Activated CD8-positive, alpha-beta T cell treated with anti-CD3 and anti-CD28 coated beads, Interleukin-2, amount 10 ng/mL, durations not matched to agents 7 days and 5 days (primary cell): ENCODE measurements at regions of chr17 and their contacts with region 1.

Region 1: DNA sequence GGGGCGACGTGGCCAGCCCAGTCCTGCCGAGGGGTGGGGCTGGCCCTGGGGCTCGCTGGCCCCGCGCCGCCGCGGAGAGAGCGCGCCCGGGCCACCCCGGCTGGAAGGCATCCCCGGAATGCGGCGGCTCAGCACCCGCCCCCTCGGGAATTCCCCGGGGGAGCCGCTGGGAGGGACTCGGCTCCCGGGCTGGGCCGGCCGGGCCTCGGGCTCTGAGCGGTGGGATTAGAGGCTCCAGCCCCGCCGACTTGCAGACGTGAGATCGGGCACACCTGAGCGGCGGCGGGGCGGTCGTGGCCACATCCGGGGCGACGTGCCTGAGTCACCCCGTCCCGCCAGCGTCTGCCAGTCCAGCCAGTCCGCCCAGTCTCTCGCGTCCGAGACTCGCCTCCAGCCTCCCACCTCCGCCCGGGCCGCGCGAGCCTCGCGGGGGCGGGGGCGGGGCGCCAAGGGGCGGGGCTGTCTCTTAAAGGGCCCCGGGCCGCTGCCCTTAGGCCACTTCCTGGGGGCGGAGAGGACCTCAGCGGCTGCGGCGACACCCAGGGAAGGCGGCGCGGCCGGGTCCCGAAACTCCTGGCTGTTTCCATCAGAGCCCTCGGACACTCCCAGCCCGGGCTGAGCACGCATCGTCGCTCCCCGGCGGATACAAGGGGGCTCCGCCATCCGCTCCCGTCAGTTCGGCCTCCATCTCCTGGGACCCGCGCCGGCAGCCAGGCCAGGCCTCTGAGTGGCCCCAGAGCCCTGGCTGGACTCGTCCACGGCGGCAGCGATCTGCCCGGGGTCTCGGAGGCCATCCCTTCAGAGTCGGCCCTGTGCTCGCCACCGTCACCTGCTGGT is at the start of gene KCTD11:
- DNase-seq: peak; percentile 87
- ATAC-seq: peak; percentile 63
- H3K4me3 Mint-ChIP-seq: peak within 1 kb of the TSS; percentile 76
- H3K27ac Mint-ChIP-seq: peak within 1 kb of the TSS; percentile 81
- H3K4me1 Mint-ChIP-seq: peaks cover 80% of the 10 kb centered on the region
- H3K27me3 Mint-ChIP-seq: no peaks in the 10 kb centered on the region
- total RNA-seq, gene KCTD11: 11.4 to 11.8 TPM

Region 2: GRCh38 chr17:7177954-7178477 is 173.9 kb before region 1 on chr17:
- CTCF ChIA-PET with region 1: no interaction called
- POLR2A ChIA-PET with region 1: no interaction called
- DNase-seq: no peak
- ATAC-seq: no peak
- H3K4me3 Mint-ChIP-seq: peak overlapping the region; percentile 48
- H3K27ac Mint-ChIP-seq: no peak overlapping the region
- H3K4me1 Mint-ChIP-seq: peaks cover 12% of the 10 kb centered on the region
- H3K27me3 Mint-ChIP-seq: peaks cover 14% of the 10 kb centered on the region

Region 3: GRCh38 chr17:7329374-7329996 is 22.4 kb before region 1 on chr17:
- CTCF ChIA-PET with region 1: interaction called, 41 read pairs
- POLR2A ChIA-PET with region 1: interaction called, 54 read pairs
- DNase-seq: peak; percentile 98
- ATAC-seq: peak; percentile 63
- H3K4me3 Mint-ChIP-seq: peak overlapping the region; percentile 87
- H3K27ac Mint-ChIP-seq: peak overlapping the region; percentile 98
- H3K4me1 Mint-ChIP-seq: peaks cover 54% of the 10 kb centered on the region
- H3K27me3 Mint-ChIP-seq: no peaks in the 10 kb centered on the region

Region 4: GRCh38 chr17:7336240-7337175 is 15.4 kb before region 1 on chr17 and contains the start of gene ACAP1:
- CTCF ChIA-PET with region 1: interaction called, 41 read pairs
- POLR2A ChIA-PET with region 1: interaction called, 54 read pairs
- DNase-seq: peak; percentile 95
- ATAC-seq: peak; percentile 95
- H3K4me3 Mint-ChIP-seq: peak within 1 kb of the TSS; percentile 85
- H3K27ac Mint-ChIP-seq: peak within 1 kb of the TSS; percentile 98
- H3K4me1 Mint-ChIP-seq: peaks cover 59% of the 10 kb centered on the region
- H3K27me3 Mint-ChIP-seq: no peaks in the 10 kb centered on the region
- total RNA-seq, gene ACAP1: 573 to 605 TPM

Region 5: GRCh38 chr17:7369825-7370224 is 17.9 kb after region 1 on chr17:
- CTCF ChIA-PET with region 1: interaction called, 10 read pairs
- POLR2A ChIA-PET with region 1: no interaction called
- DNase-seq: no peak
- ATAC-seq: no peak
- H3K4me3 Mint-ChIP-seq: no peak overlapping the region
- H3K27ac Mint-ChIP-seq: no peak overlapping the region
- H3K4me1 Mint-ChIP-seq: no peaks in the 10 kb centered on the region
- H3K27me3 Mint-ChIP-seq: peaks cover 2% of the 10 kb centered on the region

Region 6: DNA sequence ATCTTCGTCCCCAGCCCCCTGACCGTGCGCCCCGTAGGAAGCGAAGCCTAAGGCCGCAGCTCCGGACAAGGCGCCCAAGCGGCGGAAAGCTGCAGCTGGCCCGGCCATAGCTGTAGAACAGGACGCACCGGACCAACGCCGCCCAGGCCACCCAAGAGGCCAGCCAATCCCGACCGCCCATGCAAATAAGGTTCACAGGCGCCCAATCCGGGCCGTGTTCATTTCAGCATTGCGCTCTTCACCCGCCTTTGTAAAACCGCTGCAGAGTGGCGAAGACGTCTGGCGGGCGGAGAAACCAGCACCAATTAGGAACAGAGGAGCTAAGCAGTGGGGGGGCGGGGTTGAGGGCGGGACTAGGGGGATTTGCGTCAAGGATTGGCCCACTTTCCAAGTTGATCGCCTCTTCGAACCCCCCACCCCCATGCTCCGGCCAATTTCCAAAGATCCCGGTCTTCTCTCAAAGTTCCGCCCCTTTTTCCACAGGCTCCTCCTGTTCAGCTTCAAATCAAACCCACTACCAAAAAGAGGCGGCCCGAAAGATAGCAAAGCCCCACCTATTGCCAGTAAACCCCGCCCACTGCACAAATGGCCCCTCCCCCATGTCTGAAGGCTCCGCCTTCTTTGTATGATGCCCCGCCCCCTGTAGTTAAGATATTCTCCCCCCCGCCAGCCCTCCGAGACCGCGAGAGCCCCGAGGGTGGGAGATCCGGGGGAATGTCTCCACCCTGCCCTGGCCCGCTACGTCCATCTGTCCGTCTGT is 52.3 kb after region 1 on chr17 and contains the start of gene TMEM256:
- CTCF ChIA-PET with region 1: interaction called, 10 read pairs
- POLR2A ChIA-PET with region 1: no interaction called
- DNase-seq: peak; percentile 99
- ATAC-seq: peak; percentile 94
- H3K4me3 Mint-ChIP-seq: peak within 1 kb of the TSS; percentile 95
- H3K27ac Mint-ChIP-seq: peak within 1 kb of the TSS; percentile 94
- H3K4me1 Mint-ChIP-seq: peaks cover 18% of the 10 kb centered on the region
- H3K27me3 Mint-ChIP-seq: peaks cover 9% of the 10 kb centered on the region
- total RNA-seq, gene TMEM256: 61.8 to 62.3 TPM

Region 7: DNA sequence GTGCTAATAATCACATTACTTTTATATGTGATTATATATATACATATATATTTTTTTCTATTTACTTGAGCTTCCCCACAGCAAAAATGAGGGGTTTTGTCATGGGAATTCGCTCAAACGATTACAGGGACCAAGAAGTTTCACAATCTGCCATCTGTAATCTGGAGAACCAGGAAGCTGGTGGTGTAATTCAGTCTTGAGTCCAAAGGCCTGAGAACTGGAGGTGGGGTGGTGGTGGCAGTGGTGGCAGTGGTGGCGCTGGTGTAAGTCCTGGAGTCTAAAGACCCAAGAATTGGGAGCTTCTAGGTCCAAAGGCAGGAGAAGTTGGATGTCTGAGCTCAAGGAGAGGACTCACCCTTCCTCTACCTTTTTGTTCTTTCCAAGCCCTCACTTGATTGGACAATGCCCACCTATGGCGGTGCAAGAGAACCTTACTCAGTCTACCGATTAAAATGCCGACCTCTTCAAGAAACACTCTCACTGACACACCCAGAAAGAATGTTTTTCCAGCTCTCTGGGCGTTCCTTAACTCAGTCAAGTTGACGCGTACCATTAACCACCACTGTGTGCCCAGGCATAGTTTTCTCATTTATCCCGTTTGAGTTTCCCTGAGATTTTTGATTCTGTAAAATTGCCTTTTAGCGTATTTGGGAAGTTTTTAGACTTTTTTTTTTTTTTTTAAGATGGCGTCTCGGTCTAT is 164.2 kb after region 1 on chr17:
- CTCF ChIA-PET with region 1: interaction called, 13 read pairs
- POLR2A ChIA-PET with region 1: no interaction called
- DNase-seq: no peak
- ATAC-seq: no peak
- H3K4me3 Mint-ChIP-seq: no peak overlapping the region
- H3K27ac Mint-ChIP-seq: no peak overlapping the region
- H3K4me1 Mint-ChIP-seq: peaks cover 4% of the 10 kb centered on the region
- H3K27me3 Mint-ChIP-seq: no peaks in the 10 kb centered on the region

Region 8: GRCh38 chr17:7589204-7589868 is 237.5 kb after region 1 on chr17:
- CTCF ChIA-PET with region 1: interaction called, 10 read pairs
- POLR2A ChIA-PET with region 1: interaction called, 3 read pairs
- DNase-seq: peak; percentile 74
- ATAC-seq: peak; percentile 75
- H3K4me3 Mint-ChIP-seq: no peak overlapping the region
- H3K27ac Mint-ChIP-seq: no peak overlapping the region
- H3K4me1 Mint-ChIP-seq: peaks cover 20% of the 10 kb centered on the region
- H3K27me3 Mint-ChIP-seq: no peaks in the 10 kb centered on the region